Activated naive CD8-positive, alpha-beta T cell treated with anti-CD3 and anti-CD28 coated beads, Interleukin-2, amount 10 ng/mL, durations not matched to agents 7 days and 5 days (primary cell): ENCODE measurements at regions of chr15 and their contacts with region 1.

Region 1: DNA sequence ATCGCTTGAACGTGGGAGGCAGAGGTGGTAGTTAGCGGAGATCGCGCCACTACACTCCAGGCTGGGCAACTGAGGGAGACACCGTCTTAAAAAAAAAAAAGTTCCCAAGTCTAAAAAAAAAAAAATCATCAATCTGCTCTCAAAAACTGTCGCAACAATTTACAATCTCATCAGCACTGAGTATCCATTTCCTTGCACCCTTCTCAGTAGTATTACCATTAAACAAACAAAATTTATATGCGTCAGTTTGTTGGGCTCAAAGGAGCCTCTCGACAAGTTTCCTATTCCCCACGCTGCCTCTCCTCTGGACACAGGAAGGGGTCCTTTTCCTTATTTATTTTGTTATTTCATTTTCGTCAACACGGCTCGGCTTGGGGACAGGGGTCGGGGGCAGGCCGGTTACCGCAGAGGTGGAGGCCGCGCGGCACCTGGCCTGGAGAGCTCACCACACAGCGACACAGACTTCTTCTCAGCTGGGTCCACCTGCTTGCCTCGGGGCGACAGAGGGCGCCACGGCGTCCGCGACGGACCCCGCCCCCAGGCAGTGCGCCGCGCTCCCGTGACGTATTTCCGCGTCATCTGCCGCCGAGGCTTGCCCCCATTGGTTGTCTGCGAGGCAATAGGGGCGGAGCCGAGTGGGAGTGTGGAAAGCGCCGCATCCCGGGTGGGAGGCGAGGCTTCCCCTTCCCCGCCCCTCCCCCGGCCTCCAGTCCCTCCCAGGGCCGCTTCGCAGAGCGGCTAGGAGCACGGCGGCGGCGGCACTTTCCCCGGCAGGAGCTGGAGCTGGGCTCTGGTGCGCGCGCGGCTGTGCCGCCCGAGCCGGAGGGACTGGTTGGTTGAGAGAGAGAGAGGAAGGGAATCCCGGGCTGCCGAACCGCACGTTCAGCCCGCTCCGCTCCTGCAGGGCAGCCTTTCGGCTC is at the start of gene MAP2K1:
- DNase-seq: peak; percentile 98
- ATAC-seq: peak; percentile 87
- H3K4me3 Mint-ChIP-seq: peak within 1 kb of the TSS; percentile 100
- H3K27ac Mint-ChIP-seq: peak within 1 kb of the TSS; percentile 99
- H3K4me1 Mint-ChIP-seq: peaks cover 43% of the 10 kb centered on the region
- H3K27me3 Mint-ChIP-seq: no peaks in the 10 kb centered on the region
- total RNA-seq, gene MAP2K1: 95.0 to 96.5 TPM

Region 2: GRCh38 chr15:66356345-66357236 is 29.9 kb before region 1 on chr15 and contains the start of gene TIPIN:
- POLR2A ChIA-PET with region 1: interaction called, 19 read pairs
- DNase-seq: peak; percentile 98
- ATAC-seq: peak; percentile 95
- H3K4me3 Mint-ChIP-seq: peak within 1 kb of the TSS; percentile 100
- H3K27ac Mint-ChIP-seq: peak within 1 kb of the TSS; percentile 100
- H3K4me1 Mint-ChIP-seq: peaks cover 21% of the 10 kb centered on the region
- H3K27me3 Mint-ChIP-seq: no peaks in the 10 kb centered on the region
- total RNA-seq, gene TIPIN: 29.5 to 31.3 TPM

Region 3: GRCh38 chr15:66369773-66370651 is 16.5 kb before region 1 on chr15:
- POLR2A ChIA-PET with region 1: interaction called, 28 read pairs
- DNase-seq: peak; percentile 39
- ATAC-seq: peak; percentile 86
- H3K4me3 Mint-ChIP-seq: peak overlapping the region; percentile 81
- H3K27ac Mint-ChIP-seq: peak overlapping the region; percentile 96
- H3K4me1 Mint-ChIP-seq: peaks cover 21% of the 10 kb centered on the region
- H3K27me3 Mint-ChIP-seq: no peaks in the 10 kb centered on the region

Region 4: GRCh38 chr15:66401130-66402021 is 14.9 kb after region 1 on chr15:
- POLR2A ChIA-PET with region 1: interaction called, 13 read pairs
- DNase-seq: peak; percentile 53
- ATAC-seq: peak; percentile 74
- H3K4me3 Mint-ChIP-seq: peak overlapping the region; percentile 84
- H3K27ac Mint-ChIP-seq: peak overlapping the region; percentile 85
- H3K4me1 Mint-ChIP-seq: peaks cover 56% of the 10 kb centered on the region
- H3K27me3 Mint-ChIP-seq: no peaks in the 10 kb centered on the region

Region 5: GRCh38 chr15:66452971-66453580 is 66.6 kb after region 1 on chr15:
- POLR2A ChIA-PET with region 1: no interaction called
- DNase-seq: no peak
- ATAC-seq: no peak
- H3K4me3 Mint-ChIP-seq: no peak overlapping the region
- H3K27ac Mint-ChIP-seq: no peak overlapping the region
- H3K4me1 Mint-ChIP-seq: peaks cover 4% of the 10 kb centered on the region
- H3K27me3 Mint-ChIP-seq: no peaks in the 10 kb centered on the region

Region 6: GRCh38 chr15:66472176-66472999 is 85.9 kb after region 1 on chr15:
- POLR2A ChIA-PET with region 1: interaction called, 10 read pairs
- DNase-seq: peak; percentile 41
- ATAC-seq: peak; percentile 94
- H3K4me3 Mint-ChIP-seq: peak overlapping the region; percentile 75
- H3K27ac Mint-ChIP-seq: peak overlapping the region; percentile 79
- H3K4me1 Mint-ChIP-seq: peaks cover 33% of the 10 kb centered on the region
- H3K27me3 Mint-ChIP-seq: no peaks in the 10 kb centered on the region

Region 7: DNA sequence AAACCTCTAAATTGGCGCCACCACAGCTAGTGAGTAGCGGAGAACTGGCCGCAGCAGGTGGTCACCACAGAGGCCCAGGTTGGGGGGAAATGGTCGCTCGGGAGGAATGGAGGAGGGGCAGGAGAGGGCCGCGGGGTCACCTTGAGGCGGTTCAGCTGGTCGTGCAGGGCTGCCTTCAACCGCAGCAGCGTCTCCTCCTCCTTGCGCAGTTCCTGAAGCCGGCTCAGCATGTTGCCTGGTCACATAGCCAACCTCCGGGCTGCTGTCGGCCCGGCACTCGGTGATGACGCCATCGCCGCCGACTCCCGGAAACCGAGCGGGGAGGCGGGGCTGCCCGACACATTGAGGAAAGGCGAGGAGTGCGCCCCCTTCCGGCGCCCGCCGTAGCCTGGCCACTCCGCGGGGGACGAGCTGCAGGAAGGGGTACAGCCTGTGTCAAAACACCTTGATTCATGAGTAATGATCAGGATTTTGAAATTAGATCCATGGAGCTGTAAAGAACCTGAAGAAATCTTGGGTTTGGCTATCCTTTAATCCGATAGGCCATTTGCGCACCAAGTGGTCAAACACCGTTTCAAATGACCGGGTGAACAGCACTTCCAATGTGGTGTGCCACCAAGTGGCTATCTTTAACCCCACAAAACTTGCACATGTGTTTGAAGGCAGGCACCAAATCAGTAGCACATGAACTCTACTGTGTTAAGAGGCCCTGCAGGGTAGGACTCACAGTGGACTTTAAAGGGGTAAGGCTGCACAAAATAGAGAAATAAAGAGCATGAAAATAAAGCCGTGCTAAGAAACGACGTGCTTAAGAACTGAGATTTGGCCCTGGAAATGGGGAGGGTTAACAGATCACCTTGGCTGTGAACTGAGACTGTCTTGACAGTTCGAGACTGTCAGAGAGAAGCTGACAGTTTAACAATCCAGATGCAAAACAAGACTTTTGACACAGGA is 111.3 kb after region 1 on chr15 and contains the start of gene SNAPC5:
- POLR2A ChIA-PET with region 1: interaction called, 50 read pairs
- DNase-seq: peak; percentile 99
- ATAC-seq: peak; percentile 94
- H3K4me3 Mint-ChIP-seq: peak within 1 kb of the TSS; percentile 95
- H3K27ac Mint-ChIP-seq: peak within 1 kb of the TSS; percentile 94
- H3K4me1 Mint-ChIP-seq: peaks cover 38% of the 10 kb centered on the region
- H3K27me3 Mint-ChIP-seq: no peaks in the 10 kb centered on the region
- total RNA-seq, gene SNAPC5: 32.4 to 33.7 TPM

Region 8: GRCh38 chr15:66504563-66505429 is 118.3 kb after region 1 on chr15 and contains the starts of genes RPL4 and ZWILCH:
- POLR2A ChIA-PET with region 1: interaction called, 50 read pairs
- DNase-seq: peak; percentile 82
- ATAC-seq: peak; percentile 83
- H3K4me3 Mint-ChIP-seq: peak within 1 kb of the TSS; percentile 100
- H3K27ac Mint-ChIP-seq: peak within 1 kb of the TSS; percentile 99
- H3K4me1 Mint-ChIP-seq: peaks cover 47% of the 10 kb centered on the region
- H3K27me3 Mint-ChIP-seq: no peaks in the 10 kb centered on the region
- total RNA-seq, gene RPL4: 2,522 to 2,542 TPM
- total RNA-seq, gene ZWILCH: 28.1 to 28.7 TPM